Naive thymus-derived CD4-positive, alpha-beta T cell (primary cell): ENCODE measurements at regions of chr10 and their contacts with region 1.

Region 1: DNA sequence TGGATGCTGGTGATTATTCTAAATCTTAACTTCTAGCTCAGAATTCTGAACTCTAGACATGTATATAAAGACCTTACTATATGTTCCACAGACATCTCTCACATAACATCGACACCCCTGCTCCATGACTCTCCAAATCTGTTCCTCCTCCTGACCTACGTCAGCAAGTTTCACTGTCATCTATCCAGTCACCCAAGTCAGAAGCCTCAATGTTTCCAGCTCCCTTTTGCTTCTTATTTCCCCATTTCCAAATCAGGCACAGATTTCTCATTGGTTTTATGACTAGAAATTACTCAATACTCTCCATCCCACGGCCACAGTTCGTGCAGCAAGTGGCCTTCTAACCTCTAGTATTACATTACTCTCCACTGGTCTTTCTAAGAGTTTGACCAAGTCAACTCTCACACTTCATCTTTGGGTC is 28.5 kb downstream of the EPC1 start:
- DNase-seq: no peak
- ATAC-seq: peak; percentile 81
- H3K4me3 ChIP-seq: peak overlapping the region; percentile 12
- H3K4me3 Mint-ChIP-seq: peak overlapping the region; percentile 3 to 74 (median 60)
- H3K27ac ChIP-seq: peak overlapping the region; percentile 41
- H3K27ac Mint-ChIP-seq: peak overlapping the region; percentile 37 to 88 (median 59)
- H3K4me1 ChIP-seq: peaks cover 63 to 75% of the 10 kb centered on the region in 2 donors
- H3K4me1 Mint-ChIP-seq: peaks cover 63 to 97% (median 89%) of the 10 kb centered on the region in 7 donors
- H3K27me3 ChIP-seq: no peaks in the 10 kb centered on the region
- H3K27me3 Mint-ChIP-seq: no peaks in the 10 kb centered on the region

Region 2: DNA sequence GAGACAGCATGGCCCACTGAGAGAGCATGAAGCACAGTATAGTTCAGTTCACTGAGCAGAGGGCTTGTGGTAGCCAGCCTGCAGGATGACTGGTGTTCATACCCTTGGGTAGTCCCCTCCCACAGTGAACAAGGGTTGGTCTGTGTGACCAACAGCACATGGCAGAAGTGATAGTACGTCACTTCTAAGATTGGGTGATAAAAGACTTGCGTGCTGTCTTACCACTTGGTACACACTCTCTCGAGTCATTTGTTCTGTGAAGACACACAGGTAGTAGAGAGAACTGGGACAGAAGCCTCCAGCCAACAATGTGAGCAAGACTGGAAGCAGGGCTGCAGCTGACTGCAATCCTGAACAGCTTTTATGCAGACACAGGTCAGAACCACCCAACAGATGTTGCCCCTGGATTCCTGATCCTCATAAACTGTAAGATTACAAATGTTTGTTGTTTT is 13.8 kb after region 1 on chr10:
- CTCF ChIA-PET with region 1: no interaction called
- POLR2A ChIA-PET with region 1: interaction called, 4 read pairs
- intact Hi-C with region 1: loop called (anchors 1 to 2 kb)
- DNase-seq: peak; percentile 16 to 92 (median 71)
- ATAC-seq: peak; percentile 96
- H3K4me3 ChIP-seq: no peak overlapping the region
- H3K4me3 Mint-ChIP-seq: peak overlapping the region; percentile 52 to 84 (median 70)
- H3K27ac ChIP-seq: peak overlapping the region; percentile 56
- H3K27ac Mint-ChIP-seq: peak overlapping the region; percentile 41 to 95 (median 85)
- H3K4me1 ChIP-seq: peaks cover 80 to 84% of the 10 kb centered on the region in 2 donors
- H3K4me1 Mint-ChIP-seq: peaks cover 78 to 98% (median 94%) of the 10 kb centered on the region in 7 donors
- H3K27me3 ChIP-seq: no peaks in the 10 kb centered on the region
- H3K27me3 Mint-ChIP-seq: no peaks in the 10 kb centered on the region